ENCODE measurements at regions of chr4 and their contacts with region 1.

Region 1: GRCh38 chr4:123785538-123785937 is 388.9 kb downstream of the SPRY1 start:
- DNase-seq: no peak

Region 2: GRCh38 chr4:123826896-123827295 is 41.4 kb after region 1 on chr4:
- intact Hi-C with region 1: loop called (anchors 2 kb)
- DNase-seq: no peak

Region 3: GRCh38 chr4:123869286-123870060 is 83.9 kb after region 1 on chr4:
- intact Hi-C with region 1: no loop called
- DNase-seq: no peak

Region 4: GRCh38 chr4:123893011-123893981 is 107.8 kb after region 1 on chr4:
- intact Hi-C with region 1: loop called (anchors 10 kb)
- DNase-seq: no peak